T-cell (primary cell): ENCODE measurements at regions of chr2 and their contacts with region 1.

Region 1: GRCh38 chr2:84781942-84782716 is 98.8 kb downstream of the TRABD2A start:
- DNase-seq: peak; percentile 15 to 75 (median 57)
- ATAC-seq: peak; percentile 82 to 94 (median 94)
- H3K4me3 ChIP-seq: no peak overlapping the region
- H3K4me3 Mint-ChIP-seq: peak overlapping the region; percentile 58 to 68 (median 63)
- H3K27ac ChIP-seq: peak overlapping the region; percentile 79
- H3K27ac Mint-ChIP-seq: peak overlapping the region; percentile 93 to 96
- H3K4me1 ChIP-seq: peaks cover 46 to 58% of the 10 kb centered on the region in 2 experiments
- H3K4me1 Mint-ChIP-seq: peaks cover 80 to 90% (median 88%) of the 10 kb centered on the region in 3 donors
- H3K27me3 ChIP-seq: no peaks in the 10 kb centered on the region
- H3K27me3 Mint-ChIP-seq: no peaks in the 10 kb centered on the region

Region 2: DNA sequence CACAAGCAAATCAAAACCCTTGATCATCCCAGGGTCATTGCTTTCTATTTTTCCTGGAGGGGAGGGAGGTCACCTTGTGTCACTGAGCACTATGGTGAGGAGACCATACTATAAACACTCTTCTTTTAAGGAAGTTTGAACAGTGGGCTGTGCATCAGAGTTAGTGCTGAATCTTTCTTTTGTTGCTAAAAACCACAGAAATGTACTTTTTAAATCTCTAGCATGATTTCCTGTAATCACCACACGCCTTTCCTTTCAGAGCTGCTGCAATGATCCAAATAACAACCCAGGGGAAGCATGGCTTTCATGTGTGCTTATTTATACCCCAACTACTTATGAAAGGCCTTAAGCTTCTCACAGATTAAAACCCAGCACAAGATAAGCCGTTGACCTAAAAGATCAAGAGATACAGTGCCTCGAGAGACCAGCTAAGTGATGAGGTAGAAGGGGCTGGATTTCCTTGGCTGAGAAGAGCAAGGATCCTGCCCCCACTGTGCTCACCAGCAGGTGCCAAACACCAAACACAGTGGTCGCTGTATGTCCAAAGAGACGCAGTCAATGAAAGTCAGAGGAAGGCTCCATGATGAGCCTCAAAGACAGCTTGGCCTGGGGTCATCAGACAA is 64.0 kb after region 1 on chr2:
- CTCF ChIA-PET with region 1: interaction called in 1 of 2 experiments, 12 read pairs
- POLR2A ChIA-PET with region 1: interaction called, 3 to 4 read pairs
- DNase-seq: peak in 32 of 35 experiments; percentile 7 to 81 (median 52)
- ATAC-seq: peak; percentile 75 to 83 (median 79)
- H3K4me3 ChIP-seq: peak overlapping the region in 1 of 2 donors; percentile 45
- H3K4me3 Mint-ChIP-seq: peak overlapping the region; percentile 46 to 74 (median 62)
- H3K27ac ChIP-seq: peak overlapping the region; percentile 94
- H3K27ac Mint-ChIP-seq: peak overlapping the region; percentile 97 to 99
- H3K4me1 ChIP-seq: peaks cover 87 to 98% of the 10 kb centered on the region in 2 experiments
- H3K4me1 Mint-ChIP-seq: peaks cover 91 to 98% (median 97%) of the 10 kb centered on the region in 3 donors
- H3K27me3 ChIP-seq: no peaks in the 10 kb centered on the region
- H3K27me3 Mint-ChIP-seq: no peaks in the 10 kb centered on the region